Activated T-helper 1 cell treated with anti-CD3 and anti-CD28 coated beads, Interleukin-12 subunit alpha, Interleukin-12 subunit beta, Interleukin-2, Interleukin-4 antibody, amounts not matched to agents 30 ng/mL and 10 ng/mL and 1 ng/mL, durations not matched to agents 14 hours and 24 hours and 36 hours (primary cell): ENCODE measurements at regions of chr17 and their contacts with region 1.

Region 1: GRCh38 chr17:75456417-75457046 is at the start of gene TMEM94:
- DNase-seq: peak; percentile 89
- H3K4me3 Mint-ChIP-seq: peak within 1 kb of the TSS; percentile 92
- H3K27ac Mint-ChIP-seq: peak within 1 kb of the TSS; percentile 84
- H3K4me1 Mint-ChIP-seq: peaks cover 35% of the 10 kb centered on the region
- H3K27me3 Mint-ChIP-seq: no peaks in the 10 kb centered on the region
- total RNA-seq, gene TMEM94: 67.0 and 70.4 TPM in 2 replicates

Region 2: GRCh38 chr17:75515496-75516254 is 59.1 kb after region 1 on chr17 and contains the start of gene CASKIN2:
- intact Hi-C with region 1: loop called (anchors 1 kb)
- DNase-seq: peak; percentile 62
- H3K4me3 Mint-ChIP-seq: peak within 1 kb of the TSS; percentile 78
- H3K27ac Mint-ChIP-seq: no peak within 1 kb of the TSS
- H3K4me1 Mint-ChIP-seq: peaks cover 18% of the 10 kb centered on the region
- H3K27me3 Mint-ChIP-seq: peaks cover 17% of the 10 kb centered on the region
- total RNA-seq, gene CASKIN2: 0.88 and 2.0 TPM in 2 replicates

Region 3: DNA sequence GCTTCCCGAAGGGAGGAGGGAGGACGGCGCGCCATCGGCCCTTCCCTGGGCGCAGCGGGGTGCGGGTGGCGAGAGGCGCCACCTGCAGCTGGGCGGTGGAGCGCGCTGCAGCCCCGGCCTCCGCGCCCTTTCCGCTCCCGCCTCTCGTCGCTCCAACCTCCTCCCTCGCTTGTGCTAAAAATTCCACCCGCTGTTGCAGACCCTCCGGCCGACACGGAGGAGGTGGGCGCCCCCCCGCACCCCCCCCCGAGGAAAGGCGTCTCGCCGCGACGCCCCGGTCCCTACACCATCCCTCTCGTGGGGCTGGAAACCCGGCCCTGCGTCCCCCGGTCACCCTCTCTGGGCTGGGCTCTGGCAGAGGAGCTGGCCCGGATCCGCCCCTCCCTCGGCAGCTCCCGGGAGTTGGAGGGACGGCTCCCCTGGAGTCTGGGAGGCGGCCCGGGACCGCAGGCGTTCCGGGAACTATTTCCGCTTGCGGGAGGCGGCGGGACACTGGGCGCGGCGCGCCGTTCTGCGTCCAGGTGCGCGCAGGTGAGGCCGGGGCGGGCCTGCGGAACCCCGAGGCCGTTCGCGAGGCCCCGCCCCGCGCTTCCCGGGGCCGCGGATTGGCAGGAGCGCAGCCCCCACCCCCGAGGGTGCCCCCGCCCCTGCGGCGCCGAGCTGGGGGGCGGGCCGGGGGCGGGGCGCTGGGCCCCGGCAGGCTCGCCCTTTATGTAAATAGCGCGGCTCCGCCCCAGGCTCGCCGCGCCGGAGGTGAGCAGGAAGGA is 68.6 kb after region 1 on chr17 and contains the start of gene LLGL2:
- intact Hi-C with region 1: loop called (anchors 2 kb)
- DNase-seq: peak; percentile 81
- H3K4me3 Mint-ChIP-seq: peak within 1 kb of the TSS; percentile 69
- H3K27ac Mint-ChIP-seq: no peak within 1 kb of the TSS
- H3K4me1 Mint-ChIP-seq: peaks cover 6% of the 10 kb centered on the region
- H3K27me3 Mint-ChIP-seq: peaks cover 10% of the 10 kb centered on the region
- total RNA-seq, gene LLGL2: 7.1 and 8.2 TPM in 2 replicates

Region 4: DNA sequence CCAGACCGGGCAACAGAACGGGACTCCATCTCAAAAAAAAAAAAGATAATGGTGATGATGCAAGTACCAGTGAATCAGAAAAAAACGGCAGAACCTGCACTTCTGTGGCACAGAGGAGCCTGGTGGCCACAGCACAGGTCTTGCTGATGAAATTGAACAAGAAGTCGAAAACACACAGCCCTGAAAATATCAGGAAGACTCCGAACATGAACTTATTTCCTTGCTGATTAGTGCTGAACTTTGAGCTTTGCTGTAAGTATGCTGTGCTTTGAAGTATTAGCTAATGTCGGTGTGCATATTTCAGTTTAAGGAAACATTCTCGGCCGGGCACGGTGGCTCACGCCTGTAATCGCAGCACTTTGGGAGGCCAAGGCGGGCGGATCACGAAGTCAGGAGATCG is 120.1 kb after region 1 on chr17:
- intact Hi-C with region 1: loop called (anchors 2 kb)
- DNase-seq: no peak
- H3K4me3 Mint-ChIP-seq: no peak overlapping the region
- H3K27ac Mint-ChIP-seq: no peak overlapping the region
- H3K4me1 Mint-ChIP-seq: peaks cover 8% of the 10 kb centered on the region
- H3K27me3 Mint-ChIP-seq: peaks cover 12% of the 10 kb centered on the region

Region 5: DNA sequence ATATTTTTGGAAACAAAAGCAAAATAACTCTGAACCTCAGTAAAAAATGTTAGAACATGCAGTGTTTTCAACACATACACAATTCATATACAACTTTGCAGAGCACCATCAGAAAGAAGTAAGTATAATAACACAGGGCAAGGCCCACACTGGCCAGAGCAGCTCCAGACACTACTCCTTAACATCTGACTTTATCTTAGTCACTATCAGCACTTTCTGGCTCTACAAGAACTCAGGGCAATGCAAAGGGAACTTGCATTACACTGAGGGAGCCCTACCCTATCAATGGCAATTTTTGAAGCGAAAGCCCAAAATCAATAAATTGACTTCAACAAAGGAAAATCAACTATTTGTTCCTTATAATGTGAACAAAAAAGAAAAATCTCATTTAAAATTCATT is 767.3 kb after region 1 on chr17:
- intact Hi-C with region 1: no loop called
- DNase-seq: no peak
- H3K4me3 Mint-ChIP-seq: no peak overlapping the region
- H3K27ac Mint-ChIP-seq: no peak overlapping the region
- H3K4me1 Mint-ChIP-seq: peaks cover 26% of the 10 kb centered on the region
- H3K27me3 Mint-ChIP-seq: no peaks in the 10 kb centered on the region